ENCODE measurements at regions of chr4 and their contacts with region 1.

Region 1: DNA sequence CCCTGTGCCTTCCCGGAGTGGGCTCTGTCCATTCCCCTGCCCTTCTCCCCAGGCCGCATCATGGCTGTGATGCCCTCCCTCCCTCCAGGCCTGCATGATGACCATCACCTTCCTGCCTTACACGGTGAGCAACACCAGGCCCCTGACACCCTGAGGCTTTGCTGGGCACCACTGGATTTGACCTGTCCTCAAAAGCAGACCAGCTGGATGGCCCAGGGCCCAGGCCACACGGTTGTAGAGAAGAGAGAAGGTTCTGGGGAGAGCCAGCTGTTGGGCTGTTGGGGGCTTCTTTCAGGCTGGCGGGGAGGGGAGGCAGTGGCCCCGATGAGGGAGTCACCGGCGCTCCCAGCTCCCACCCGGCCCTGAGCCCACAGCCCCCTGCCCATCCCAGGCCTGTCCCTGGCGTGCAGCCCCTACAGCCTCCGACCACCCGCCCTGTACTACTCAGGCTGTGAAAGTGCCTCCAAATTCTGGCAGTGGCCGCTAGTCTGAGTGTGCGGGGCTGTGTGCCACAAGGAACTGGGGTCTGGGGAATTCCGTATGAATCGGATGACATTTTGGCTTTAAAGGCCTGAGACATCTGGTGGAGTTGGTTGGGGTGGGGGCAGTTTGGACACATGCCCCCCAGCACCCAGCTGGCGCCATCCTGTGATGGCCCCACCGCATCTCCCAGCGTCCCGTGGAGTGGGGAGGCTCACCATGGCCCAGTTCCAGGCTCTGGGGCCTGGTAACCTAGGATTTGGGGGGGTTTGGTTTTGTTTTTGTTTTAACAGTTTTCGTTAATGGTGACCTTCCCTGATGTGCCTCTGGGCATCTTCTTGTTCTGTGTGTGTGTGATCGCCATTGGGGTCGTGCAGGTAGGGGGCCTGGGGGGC is 19.6 kb downstream of the TMEM175 start:
- DNase-seq: peak in 1 of 7 donors; percentile 8
- H3K4me3 ChIP-seq: no peak overlapping the region
- H3K27ac ChIP-seq: no peak overlapping the region
- H3K4me1 ChIP-seq: peaks cover 0 to 3% of the 10 kb centered on the region in 2 donors
- H3K27me3 ChIP-seq: no peaks in the 10 kb centered on the region
- CTCF ChIP-seq: no peak
- POLR2A ChIP-seq: no peak

Region 2: GRCh38 chr4:781493-782216 is 170.2 kb before region 1 on chr4:
- intact Hi-C with region 1: no loop called
- DNase-seq: peak; percentile 98 to 100 (median 99)
- H3K4me3 ChIP-seq: peak overlapping the region; percentile 86 to 100 (median 96)
- H3K27ac ChIP-seq: peak overlapping the region; percentile 81 to 98 (median 93)
- H3K4me1 ChIP-seq: peaks cover 15 to 56% of the 10 kb centered on the region in 2 donors
- H3K27me3 ChIP-seq: no peaks in the 10 kb centered on the region
- CTCF ChIP-seq: peak in 1 of 6 experiments; percentile 10
- POLR2A ChIP-seq: peak; percentile 91 to 96

Region 3: GRCh38 chr4:879729-880077 is 72.1 kb before region 1 on chr4:
- intact Hi-C with region 1: loop called in 1 of 2 experiments (anchors 10 kb)
- DNase-seq: peak in 1 of 7 donors; percentile 24
- H3K4me3 ChIP-seq: no peak overlapping the region
- H3K27ac ChIP-seq: no peak overlapping the region
- H3K4me1 ChIP-seq: no peaks in the 10 kb centered on the region
- H3K27me3 ChIP-seq: no peaks in the 10 kb centered on the region
- CTCF ChIP-seq: no peak
- POLR2A ChIP-seq: no peak

Measured in adrenal gland (tissue), 19 donors.